Natural killer cell (primary cell): ENCODE measurements at regions of chr22 and their contacts with region 1.

Region 1: GRCh38 chr22:42856865-42857704 is at the start of gene ARFGAP3:
- DNase-seq: peak; percentile 98
- ATAC-seq: peak; percentile 90 to 98 (median 91)
- H3K4me3 ChIP-seq: peak within 1 kb of the TSS; percentile 72
- H3K4me3 Mint-ChIP-seq: peak within 1 kb of the TSS; percentile 93
- H3K27ac ChIP-seq: peak within 1 kb of the TSS; percentile 96
- H3K27ac Mint-ChIP-seq: peak within 1 kb of the TSS; percentile 93 to 94
- H3K4me1 ChIP-seq: peaks cover 23% of the 10 kb centered on the region
- H3K4me1 Mint-ChIP-seq: peaks cover 10 to 17% of the 10 kb centered on the region in 2 donors
- H3K27me3 ChIP-seq: no peaks in the 10 kb centered on the region
- H3K27me3 Mint-ChIP-seq: no peaks in the 10 kb centered on the region
- CTCF ChIP-seq: no peak
- total RNA-seq, gene ARFGAP3: 46.3 to 58.0 (median 53.8) TPM

Region 2: GRCh38 chr22:42758929-42759629 is 98.0 kb before region 1 on chr22:
- intact Hi-C with region 1: no loop called
- DNase-seq: no peak
- ATAC-seq: no peak
- H3K4me3 ChIP-seq: no peak overlapping the region
- H3K4me3 Mint-ChIP-seq: no peak overlapping the region
- H3K27ac ChIP-seq: no peak overlapping the region
- H3K27ac Mint-ChIP-seq: no peak overlapping the region
- H3K4me1 ChIP-seq: no peaks in the 10 kb centered on the region
- H3K4me1 Mint-ChIP-seq: no peaks in the 10 kb centered on the region
- H3K27me3 ChIP-seq: no peaks in the 10 kb centered on the region
- H3K27me3 Mint-ChIP-seq: no peaks in the 10 kb centered on the region
- CTCF ChIP-seq: no peak

Region 3: DNA sequence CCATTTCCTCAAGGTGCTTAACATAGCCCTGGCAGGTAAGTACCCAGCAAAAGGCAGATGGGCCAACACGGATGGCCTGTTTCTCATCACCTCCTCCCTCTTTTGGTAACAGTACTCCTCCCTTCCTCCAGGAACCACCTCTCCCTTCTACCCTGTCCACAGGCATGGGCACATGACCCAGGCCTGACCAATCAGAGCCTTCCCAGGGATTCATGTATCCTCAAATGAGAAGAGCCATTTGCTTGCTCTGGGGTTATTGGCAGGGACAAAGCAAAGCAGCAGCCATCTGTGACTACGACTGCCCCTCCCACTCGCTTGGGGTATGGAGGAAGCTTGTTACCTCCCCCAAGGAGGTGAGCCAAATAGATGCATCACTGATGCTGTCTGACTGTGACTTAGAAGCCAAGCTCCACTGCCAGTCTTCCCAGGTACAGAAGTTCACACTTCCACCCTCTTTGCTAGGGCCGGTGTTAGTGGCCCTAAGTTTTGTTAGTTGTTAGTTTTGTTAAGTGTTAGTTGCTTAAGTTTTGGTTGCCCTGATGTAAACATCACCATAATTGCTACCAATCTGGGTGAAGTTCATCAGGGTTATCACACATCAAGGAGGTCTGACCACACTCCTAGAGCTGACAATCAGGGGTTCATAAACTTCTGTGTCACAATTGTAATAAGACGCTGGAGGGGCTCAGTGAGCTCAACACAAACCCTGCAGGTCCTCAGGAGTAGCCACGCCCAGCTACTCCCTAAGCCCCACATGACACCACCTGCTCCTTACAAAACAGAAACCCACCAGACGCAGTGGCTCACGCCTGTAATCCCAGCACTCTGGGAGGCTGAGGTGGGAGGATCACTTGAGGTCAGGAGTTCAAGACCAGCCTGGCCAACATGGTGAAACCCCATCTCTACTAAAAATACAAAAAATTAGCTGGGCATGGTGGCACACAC is 57.4 kb before region 1 on chr22:
- intact Hi-C with region 1: loop called (anchors 1 kb)
- DNase-seq: peak; percentile 23 to 53
- ATAC-seq: peak; percentile 85 to 86 (median 85)
- H3K4me3 ChIP-seq: no peak overlapping the region
- H3K4me3 Mint-ChIP-seq: peak overlapping the region; percentile 68
- H3K27ac ChIP-seq: peak overlapping the region; percentile 80
- H3K27ac Mint-ChIP-seq: peak overlapping the region; percentile 90 to 93
- H3K4me1 ChIP-seq: peaks cover 23% of the 10 kb centered on the region
- H3K4me1 Mint-ChIP-seq: peaks cover 35 to 39% of the 10 kb centered on the region in 2 donors
- H3K27me3 ChIP-seq: no peaks in the 10 kb centered on the region
- H3K27me3 Mint-ChIP-seq: no peaks in the 10 kb centered on the region
- CTCF ChIP-seq: no peak